ENCODE measurements at regions of chr7 and their contacts with region 1.

Region 1: GRCh38 chr7:64951250-64951848 is 39.5 kb downstream of the ZNF117 start:
- DNase-seq: no peak
- ATAC-seq: peak; percentile 45

Region 2: DNA sequence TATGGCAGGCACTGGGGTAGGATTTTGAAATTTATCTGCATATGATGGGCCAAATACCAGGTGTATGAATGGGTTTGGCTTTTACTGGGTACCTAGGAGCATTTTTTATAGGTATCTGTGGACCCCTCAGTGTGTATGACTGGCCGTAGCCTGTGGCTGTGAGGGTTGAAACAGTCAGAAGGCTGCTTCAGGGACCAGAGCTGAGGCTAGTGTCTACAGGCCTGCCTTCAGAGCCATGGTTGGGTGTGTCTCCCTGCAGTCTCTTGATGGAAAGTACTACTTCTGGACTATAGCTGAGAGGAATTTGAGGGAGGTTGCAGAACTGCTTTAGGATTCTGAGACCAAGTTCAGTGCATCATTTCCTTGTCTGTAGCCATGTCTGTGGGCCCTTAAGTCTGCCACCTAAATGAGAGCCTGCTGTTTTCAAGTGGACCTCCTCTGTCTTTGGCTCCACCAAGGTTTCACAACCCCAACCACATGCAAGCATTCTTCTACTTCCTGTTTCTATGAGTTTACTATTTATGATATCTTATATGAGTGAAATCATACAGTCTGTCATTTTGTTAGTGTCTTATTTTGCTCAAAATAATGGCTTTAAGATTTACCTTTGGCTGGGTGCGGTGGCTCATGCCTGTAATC is 177.0 kb before region 1 on chr7:
- intact Hi-C with region 1: no loop called
- DNase-seq: no peak
- ATAC-seq: no peak

Region 3: DNA sequence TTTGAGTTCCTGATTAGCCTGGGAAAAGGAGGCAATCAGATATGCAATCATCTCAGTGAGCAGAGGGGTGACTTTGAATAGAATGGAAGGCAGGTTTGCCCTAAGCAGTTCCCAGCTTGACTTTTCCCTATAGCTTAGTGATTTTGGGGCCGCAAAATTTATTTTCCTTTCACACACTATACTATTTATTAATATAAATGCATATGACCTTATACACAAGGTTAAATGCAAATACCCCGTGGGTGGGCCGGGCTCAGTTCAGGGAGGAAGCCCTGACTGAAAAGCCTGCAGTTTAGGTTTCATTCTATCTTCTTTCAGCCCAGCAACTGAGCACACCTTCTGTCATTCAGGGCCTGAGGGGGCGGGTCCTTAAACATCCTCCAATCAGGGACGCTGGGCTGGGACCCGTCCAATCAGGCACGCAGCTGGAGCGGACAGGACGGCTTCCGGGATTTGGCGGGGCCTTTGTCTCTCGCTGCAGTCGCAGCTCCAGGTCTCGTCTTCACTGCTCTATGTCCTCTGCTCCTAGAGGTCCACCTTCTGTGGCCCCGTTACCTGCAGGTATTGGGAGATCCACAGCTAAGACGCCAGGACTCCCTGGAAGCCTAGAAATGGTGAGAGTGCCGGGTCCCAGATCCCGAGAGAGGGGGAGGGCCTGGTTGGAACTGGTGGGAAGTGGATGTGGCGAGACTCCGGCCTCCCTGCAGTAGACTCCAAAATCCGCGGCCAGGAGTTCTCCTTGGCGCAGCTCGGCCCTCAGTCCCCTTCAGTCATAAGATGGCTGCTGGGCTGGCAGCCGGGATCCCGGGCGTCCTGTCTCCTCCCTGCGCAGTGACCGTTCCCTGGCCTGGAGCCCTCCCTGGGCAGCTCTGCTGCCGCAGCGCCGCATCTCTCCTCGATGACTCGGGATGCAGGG is 48.3 kb before region 1 on chr7 and contains the start of gene ZNF273:
- intact Hi-C with region 1: no loop called
- DNase-seq: peak; percentile 95
- ATAC-seq: peak; percentile 100
- total RNA-seq, gene ZNF273: 2.4 TPM

Region 4: GRCh38 chr7:65307651-65308299 is 356.4 kb after region 1 on chr7:
- intact Hi-C with region 1: loop called (anchors 5 kb)
- DNase-seq: no peak
- ATAC-seq: peak; percentile 62

Measured in left ventricle myocardium superior (tissue), 1 donor.